ENCODE measurements at regions of chr11 and their contacts with region 1.

Region 1: GRCh38 chr11:48020092-48020755 is 39.9 kb downstream of the PTPRJ start:
- DNase-seq: no peak
- ATAC-seq: peak in 7 of 8 donors; percentile 25 to 55 (median 45)
- H3K4me3 ChIP-seq: no peak overlapping the region
- H3K27ac ChIP-seq: peak overlapping the region in 2 of 10 donors; percentile 35 to 81
- H3K4me1 ChIP-seq: peaks cover 0 to 86% (median 0%) of the 10 kb centered on the region in 9 donors
- H3K27me3 ChIP-seq: no peaks in the 10 kb centered on the region
- CTCF ChIP-seq: peak in 1 of 9 donors; percentile 22

Region 2: DNA sequence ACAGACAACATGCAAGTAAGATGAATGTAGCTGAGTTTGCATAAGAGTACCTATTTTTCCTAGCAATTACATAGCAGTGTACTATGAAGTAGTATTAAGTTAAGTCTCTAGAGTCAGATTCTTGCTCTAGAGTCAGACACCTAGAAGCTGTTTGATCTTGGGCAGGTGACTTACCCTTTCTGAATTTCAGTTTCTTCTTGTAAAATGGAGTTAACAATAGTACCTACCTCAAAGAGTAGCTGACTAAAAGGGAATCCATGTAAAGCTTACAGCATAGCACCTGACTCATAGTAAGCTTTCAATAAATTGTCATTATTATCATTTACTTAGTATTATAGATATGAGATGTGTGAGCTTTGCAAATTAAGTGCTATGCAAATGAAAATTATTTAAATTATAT is 87.7 kb before region 1 on chr11:
- intact Hi-C with region 1: loop called in 1 of 10 experiments (anchors 10 kb)
- DNase-seq: no peak
- ATAC-seq: no peak
- H3K4me3 ChIP-seq: no peak overlapping the region
- H3K27ac ChIP-seq: no peak overlapping the region
- H3K4me1 ChIP-seq: peaks cover 0 to 27% (median 0%) of the 10 kb centered on the region in 9 donors
- H3K27me3 ChIP-seq: no peaks in the 10 kb centered on the region
- CTCF ChIP-seq: no peak

Region 3: DNA sequence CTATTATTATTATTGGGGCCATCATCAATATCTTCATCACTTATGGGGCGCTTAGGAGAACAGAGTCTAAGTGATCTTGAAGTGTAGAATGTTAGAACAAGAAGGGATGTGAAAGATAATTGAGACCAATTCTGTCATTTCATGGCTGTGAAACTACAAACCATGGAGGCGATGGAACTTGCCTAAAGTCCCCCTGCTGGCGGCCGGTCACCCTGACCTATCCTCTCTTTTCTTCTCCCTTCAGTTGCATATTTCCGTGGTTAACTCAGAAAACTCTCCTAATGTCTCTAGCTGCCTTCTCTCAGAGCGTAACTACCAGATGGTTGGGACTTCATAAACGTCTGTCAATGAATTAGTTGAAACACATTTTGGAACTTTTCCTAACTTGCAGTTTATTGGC is 189.8 kb after region 1 on chr11:
- intact Hi-C with region 1: no loop called
- DNase-seq: no peak
- ATAC-seq: no peak
- H3K4me3 ChIP-seq: no peak overlapping the region
- H3K27ac ChIP-seq: no peak overlapping the region
- H3K4me1 ChIP-seq: no peaks in the 10 kb centered on the region
- H3K27me3 ChIP-seq: no peaks in the 10 kb centered on the region
- CTCF ChIP-seq: peak in 4 of 9 donors; percentile 7 to 29 (median 16)

Measured in heart right ventricle (tissue), 16 donors.